Left ventricle myocardium superior (tissue), 1 donor: ENCODE measurements at regions of chr4 and their contacts with region 1.

Region 1: GRCh38 chr4:29619168-29619567 is 1101.0 kb upstream of the PCDH7 start:
- DNase-seq: no peak
- ATAC-seq: no peak

Region 2: GRCh38 chr4:29578329-29578728 is 40.8 kb before region 1 on chr4:
- intact Hi-C with region 1: loop called (anchors 2 kb)
- DNase-seq: no peak
- ATAC-seq: no peak